Aorta (tissue), 5 donors: ENCODE measurements at regions of chr7 and their contacts with region 1.

Region 1: GRCh38 chr7:102272075-102272917 is 14.4 kb upstream of the SH2B2 start:
- DNase-seq: peak; percentile 87 to 94
- ATAC-seq: peak; percentile 84
- H3K4me3 ChIP-seq: no peak overlapping the region
- H3K27ac ChIP-seq: no peak overlapping the region
- H3K4me1 ChIP-seq: no peaks in the 10 kb centered on the region
- H3K27me3 ChIP-seq: no peaks in the 10 kb centered on the region

Region 2: DNA sequence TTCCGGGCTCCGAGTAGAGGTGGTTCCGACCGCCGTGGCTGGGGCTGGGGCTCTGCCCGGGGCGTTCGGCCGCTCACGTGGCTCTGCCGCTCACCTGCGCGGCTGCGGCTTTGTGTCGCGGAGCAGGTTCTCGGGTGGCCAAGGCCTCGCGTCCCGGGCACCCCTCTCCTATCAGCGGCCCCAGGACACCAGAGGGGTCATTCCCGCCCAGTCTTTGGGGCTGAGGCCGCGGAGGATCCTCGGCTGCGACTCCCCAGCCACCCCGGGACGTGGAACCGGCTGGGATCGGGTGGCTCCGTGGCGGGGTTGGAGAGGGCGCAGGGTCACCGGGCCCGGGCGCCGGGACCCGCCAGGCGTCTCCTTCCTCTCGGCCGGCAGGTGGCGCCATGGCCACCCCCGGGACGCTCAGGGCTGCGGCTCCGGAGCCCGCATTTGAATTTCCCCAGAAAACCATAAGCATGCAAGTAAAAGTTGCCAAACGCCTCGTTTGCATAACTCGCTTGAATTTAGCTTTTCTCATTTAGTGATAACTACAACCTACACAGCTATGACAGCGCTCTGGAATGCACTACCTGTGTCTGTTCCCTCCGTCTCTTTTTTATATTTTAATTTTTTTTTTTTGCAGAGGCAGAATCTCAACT is 908.4 kb before region 1 on chr7:
- intact Hi-C with region 1: loop called in 1 of 2 experiments (anchors 5 kb)
- DNase-seq: peak; percentile 70 to 89
- ATAC-seq: peak; percentile 91
- H3K4me3 ChIP-seq: peak overlapping the region in 1 of 2 donors; percentile 27
- H3K27ac ChIP-seq: no peak overlapping the region
- H3K4me1 ChIP-seq: no peaks in the 10 kb centered on the region
- H3K27me3 ChIP-seq: no peaks in the 10 kb centered on the region

Region 3: DNA sequence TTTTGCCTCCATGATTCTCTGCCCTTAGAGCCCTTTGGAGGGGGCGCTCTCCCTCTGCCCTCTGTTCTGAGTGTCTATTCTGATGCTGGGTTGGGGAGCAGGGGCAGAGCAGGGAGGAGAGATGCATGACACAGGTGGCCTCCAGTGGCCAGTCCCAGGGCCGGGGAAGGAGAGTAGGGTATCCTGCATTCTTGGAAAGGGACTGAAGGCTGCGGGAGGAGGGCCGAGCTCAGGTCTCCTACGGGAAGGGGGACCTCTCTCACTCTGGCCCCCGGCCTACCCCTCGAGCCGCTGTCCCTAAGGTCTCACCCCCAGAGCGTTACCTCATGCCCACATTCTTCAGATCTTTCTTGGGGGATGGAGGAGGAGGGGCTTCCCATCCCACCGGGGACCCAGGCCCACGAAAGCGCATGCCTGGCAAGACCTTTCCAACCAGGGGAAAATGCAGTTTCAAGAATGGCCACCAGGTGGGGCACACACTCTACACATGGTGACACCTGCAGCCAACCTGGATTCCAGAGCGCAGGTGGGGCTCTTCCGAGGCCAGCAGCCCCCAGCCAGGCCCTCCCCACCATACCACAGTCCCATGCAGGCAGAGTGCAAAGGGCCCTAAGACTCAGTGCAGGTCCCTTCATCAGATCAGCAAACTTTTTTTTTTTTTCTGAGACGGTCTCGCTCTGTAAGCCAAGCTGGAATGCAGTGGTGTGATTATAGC is 729.6 kb before region 1 on chr7:
- intact Hi-C with region 1: loop called (anchors 1 to 2 kb)
- DNase-seq: peak in 1 of 2 donors; percentile 86
- ATAC-seq: peak; percentile 59
- H3K4me3 ChIP-seq: no peak overlapping the region
- H3K27ac ChIP-seq: no peak overlapping the region
- H3K4me1 ChIP-seq: no peaks in the 10 kb centered on the region
- H3K27me3 ChIP-seq: no peaks in the 10 kb centered on the region

Region 4: GRCh38 chr7:101602484-101603241 is 669.6 kb before region 1 on chr7:
- intact Hi-C with region 1: loop called (anchors 5 to 10 kb)
- DNase-seq: peak; percentile 90 to 94
- ATAC-seq: peak; percentile 87
- H3K4me3 ChIP-seq: no peak overlapping the region
- H3K27ac ChIP-seq: no peak overlapping the region
- H3K4me1 ChIP-seq: no peaks in the 10 kb centered on the region
- H3K27me3 ChIP-seq: no peaks in the 10 kb centered on the region

Region 5: GRCh38 chr7:101688183-101688831 is 584.0 kb before region 1 on chr7:
- intact Hi-C with region 1: loop called (anchors 2 to 5 kb)
- DNase-seq: peak; percentile 85 to 96
- ATAC-seq: peak; percentile 91
- H3K4me3 ChIP-seq: no peak overlapping the region
- H3K27ac ChIP-seq: no peak overlapping the region
- H3K4me1 ChIP-seq: no peaks in the 10 kb centered on the region
- H3K27me3 ChIP-seq: no peaks in the 10 kb centered on the region

Region 6: GRCh38 chr7:102248456-102249395 is 23.6 kb before region 1 on chr7:
- intact Hi-C with region 1: no loop called
- DNase-seq: no peak
- ATAC-seq: no peak
- H3K4me3 ChIP-seq: no peak overlapping the region
- H3K27ac ChIP-seq: no peak overlapping the region
- H3K4me1 ChIP-seq: no peaks in the 10 kb centered on the region
- H3K27me3 ChIP-seq: no peaks in the 10 kb centered on the region

Region 7: DNA sequence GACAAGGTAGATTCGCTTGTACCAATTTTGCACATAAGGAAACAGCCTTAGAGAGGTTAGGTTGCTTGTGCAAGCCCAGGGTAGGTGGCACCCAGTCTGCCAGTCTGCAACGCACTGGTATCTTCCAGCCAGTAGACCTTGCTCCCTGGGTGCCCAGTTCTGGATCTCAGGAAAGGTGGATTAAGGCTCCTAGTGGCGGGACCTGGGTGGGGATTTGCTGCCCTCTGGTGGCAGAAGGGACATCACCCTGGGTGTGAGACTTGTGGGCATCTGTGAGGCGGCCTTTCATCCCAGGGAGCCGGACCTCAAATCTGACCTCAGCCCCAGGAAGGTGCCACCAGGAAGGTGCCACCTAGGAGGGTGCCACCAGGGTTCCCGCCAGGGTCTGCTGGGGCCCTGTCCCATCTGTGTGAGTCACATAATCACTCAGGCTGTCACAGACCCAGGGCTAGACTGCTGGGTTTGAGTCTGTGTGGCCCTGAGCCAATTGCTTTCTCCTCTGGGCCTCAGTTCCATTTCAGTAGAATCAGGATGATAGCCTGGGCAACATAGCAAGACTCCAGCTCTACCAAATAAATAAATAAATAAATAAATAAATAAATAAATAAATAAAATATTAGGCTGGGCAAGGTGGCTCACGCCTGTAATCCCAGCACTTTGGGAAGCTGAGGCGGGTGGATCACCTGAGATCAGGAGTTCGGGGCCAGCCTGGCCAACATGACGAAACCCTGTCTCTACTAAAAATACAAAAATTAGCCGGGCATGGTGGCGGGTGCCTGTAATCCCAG is 118.6 kb after region 1 on chr7:
- intact Hi-C with region 1: no loop called
- DNase-seq: peak; percentile 87 to 94
- ATAC-seq: peak; percentile 89
- H3K4me3 ChIP-seq: no peak overlapping the region
- H3K27ac ChIP-seq: no peak overlapping the region
- H3K4me1 ChIP-seq: no peaks in the 10 kb centered on the region
- H3K27me3 ChIP-seq: no peaks in the 10 kb centered on the region